A549 (cell line): ENCODE measurements at regions of chr12 and their contacts with region 1.

Region 1: DNA sequence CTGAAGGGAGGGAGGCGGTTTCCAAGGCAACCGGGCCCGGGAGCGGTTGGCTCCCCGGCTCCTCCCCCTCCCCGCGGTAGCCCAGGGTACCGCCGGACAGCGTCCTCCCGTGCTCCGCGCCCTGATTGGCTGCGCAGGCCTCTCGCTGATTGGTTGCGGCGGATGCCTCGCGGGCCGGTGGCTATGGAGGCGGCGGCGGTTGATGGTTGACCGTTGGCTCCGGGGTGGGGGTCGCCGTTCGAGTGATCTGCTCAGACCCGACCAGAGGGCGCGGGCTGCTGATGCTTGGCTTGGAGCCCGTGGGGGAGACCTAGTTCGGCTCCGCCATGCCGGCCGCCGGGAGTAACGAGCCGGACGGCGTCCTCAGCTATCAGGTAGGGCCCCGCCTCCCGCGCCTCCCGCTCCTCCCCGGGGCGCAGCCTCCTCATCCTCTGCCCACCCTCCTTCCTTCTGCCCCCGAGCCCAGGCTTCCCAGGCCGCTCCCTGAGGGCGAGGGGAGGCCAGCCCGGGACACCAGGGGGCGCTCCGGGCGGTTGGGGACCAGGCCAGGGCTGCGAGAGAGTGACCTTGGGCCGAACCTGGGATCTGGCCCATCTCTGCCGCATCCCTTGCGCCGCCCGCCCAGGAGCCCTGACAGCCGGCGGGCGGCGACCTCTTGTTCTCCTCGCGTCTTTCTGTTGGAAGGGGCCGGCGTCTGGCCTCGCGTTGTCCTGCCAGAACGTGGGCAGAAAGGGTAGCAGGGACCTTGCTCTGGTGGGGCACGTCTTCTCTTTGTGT is at the start of gene SLC4A8:
- DNase-seq: peak; percentile 80 to 96
- ATAC-seq: peak; percentile 96 to 98
- H3K4me3 ChIP-seq: peak within 1 kb of the TSS; percentile 65
- H3K27ac ChIP-seq: peak within 1 kb of the TSS in 1 of 2 experiments; percentile 75; a peak in 3 of 6 replicates
- H3K4me1 ChIP-seq: peaks cover 5% of the 10 kb centered on the region
- CTCF ChIP-seq: peak; percentile 90
- EP300 ChIP-seq: no peak
- POLR2A ChIP-seq: no peak
- RAD21 ChIP-seq: peak; percentile 56 to 79
- polyA plus RNA-seq, gene SLC4A8: 1.7 and 2.3 TPM in 2 replicates

Region 2: DNA sequence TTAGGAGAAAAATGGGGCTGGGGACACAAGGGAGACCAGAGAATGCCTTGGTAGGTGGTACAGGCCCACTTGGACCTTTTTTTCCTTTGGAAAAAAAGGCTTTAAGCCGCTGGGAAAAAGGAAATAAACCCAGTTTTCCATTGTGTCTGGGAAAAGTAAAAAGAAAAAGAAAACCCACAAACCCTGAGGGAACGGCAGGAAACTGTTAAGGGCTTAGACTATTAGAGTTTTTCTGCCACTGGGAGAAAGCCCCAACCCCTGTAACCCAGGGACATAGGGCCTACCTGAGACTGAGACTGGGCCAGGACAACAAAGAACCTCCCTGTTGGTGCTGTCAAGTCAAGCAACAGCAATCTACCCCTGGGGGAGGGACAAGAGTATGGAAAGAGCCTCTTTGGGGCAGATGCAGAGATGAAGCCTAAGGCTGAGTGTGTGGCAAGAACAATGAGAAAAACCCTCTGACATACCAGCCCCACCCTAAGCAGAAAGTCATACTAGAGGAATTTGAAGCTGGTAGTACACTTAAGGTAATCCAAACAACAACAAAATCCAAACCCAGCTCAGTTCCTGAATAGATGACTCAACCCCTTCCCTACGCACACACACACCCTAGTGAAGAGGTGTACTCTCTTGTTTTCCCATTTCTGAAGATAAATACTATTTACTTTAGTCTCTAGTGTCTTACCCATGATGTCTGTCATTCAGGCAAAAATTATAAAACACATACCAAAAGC is 638.2 kb before region 1 on chr12:
- CTCF ChIA-PET with region 1: no interaction called
- POLR2A ChIA-PET with region 1: no interaction called
- DNase-seq: peak; percentile 84 to 99
- ATAC-seq: peak; percentile 97 to 98
- H3K4me3 ChIP-seq: no peak overlapping the region
- H3K27ac ChIP-seq: peak overlapping the region; percentile 70 to 85
- H3K4me1 ChIP-seq: peaks cover 52% of the 10 kb centered on the region
- CTCF ChIP-seq: no peak
- EP300 ChIP-seq: peak; percentile 66 to 80; a peak in 4 of 5 replicates
- POLR2A ChIP-seq: no peak
- RAD21 ChIP-seq: peak in 1 of 2 experiments; percentile 1; a peak in 2 of 5 replicates

Region 3: GRCh38 chr12:51392556-51393237 is 32.2 kb before region 1 on chr12:
- CTCF ChIA-PET with region 1: interaction called, 19 read pairs
- POLR2A ChIA-PET with region 1: no interaction called
- DNase-seq: no peak
- ATAC-seq: no peak
- H3K4me3 ChIP-seq: no peak overlapping the region
- H3K27ac ChIP-seq: no peak overlapping the region
- H3K4me1 ChIP-seq: peaks cover 14% of the 10 kb centered on the region
- CTCF ChIP-seq: no peak
- EP300 ChIP-seq: no peak
- POLR2A ChIP-seq: no peak
- RAD21 ChIP-seq: no peak

Region 4: DNA sequence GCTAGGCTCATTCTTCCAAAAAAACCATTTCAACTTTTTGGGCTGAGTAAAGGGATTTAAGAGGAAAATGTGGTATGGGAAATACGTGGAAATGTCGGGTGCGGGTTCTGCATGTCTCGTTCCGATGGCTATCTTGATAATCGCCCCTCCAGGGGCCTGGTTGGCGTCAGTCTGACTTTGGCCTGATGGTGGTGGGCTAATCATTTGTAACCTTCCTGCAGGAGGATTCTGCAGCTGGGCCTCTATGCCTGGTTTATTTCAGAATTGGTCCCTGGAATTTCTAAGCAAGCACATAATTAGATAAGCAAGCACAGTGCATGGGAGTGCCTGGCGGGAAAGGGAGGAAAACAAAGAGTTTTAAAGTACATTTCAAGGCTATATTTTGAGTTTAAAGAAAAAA is 15.0 kb before region 1 on chr12:
- CTCF ChIA-PET with region 1: interaction called, 19 read pairs
- POLR2A ChIA-PET with region 1: no interaction called
- DNase-seq: no peak
- ATAC-seq: no peak
- H3K4me3 ChIP-seq: no peak overlapping the region
- H3K27ac ChIP-seq: no peak overlapping the region
- H3K4me1 ChIP-seq: no peaks in the 10 kb centered on the region
- CTCF ChIP-seq: no peak
- EP300 ChIP-seq: no peak
- POLR2A ChIP-seq: no peak
- RAD21 ChIP-seq: no peak

Region 5: DNA sequence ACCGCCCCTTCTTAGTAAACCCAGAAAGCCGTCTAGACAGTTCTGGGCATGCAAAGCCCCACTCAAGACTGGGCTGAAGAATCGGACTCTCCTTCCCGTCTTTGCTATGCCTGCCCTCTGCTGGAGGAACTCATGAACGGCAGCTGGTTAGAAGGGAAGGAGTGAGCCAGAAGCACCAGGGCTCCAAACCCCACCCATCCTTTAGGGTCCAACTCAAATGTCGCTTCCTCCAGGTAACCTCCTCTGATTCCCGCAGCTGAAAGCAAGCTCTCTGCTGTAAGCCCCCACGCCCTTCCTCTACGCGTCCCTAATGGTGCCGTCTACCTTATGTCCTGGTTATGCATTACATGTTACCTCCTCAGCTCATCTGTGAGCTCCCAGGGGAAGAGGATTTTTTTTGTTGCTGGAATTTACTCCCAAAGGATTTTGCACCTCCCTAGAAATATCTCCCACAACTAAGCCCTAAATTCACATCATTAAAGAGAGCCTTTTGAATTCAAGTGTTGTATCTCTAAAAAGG is 107.2 kb after region 1 on chr12:
- CTCF ChIA-PET with region 1: interaction called, 245 read pairs
- POLR2A ChIA-PET with region 1: no interaction called
- DNase-seq: peak; percentile 76 to 79
- ATAC-seq: peak; percentile 83 to 94
- H3K4me3 ChIP-seq: no peak overlapping the region
- H3K27ac ChIP-seq: peak overlapping the region in 1 of 2 experiments; percentile 52; a peak in 1 of 6 replicates
- H3K4me1 ChIP-seq: peaks cover 19% of the 10 kb centered on the region; the same call in 2 of the 3 replicates
- CTCF ChIP-seq: peak; percentile 89
- EP300 ChIP-seq: no peak
- POLR2A ChIP-seq: no peak
- RAD21 ChIP-seq: peak; percentile 84 to 89

Region 6: GRCh38 chr12:51814311-51815088 is 389.6 kb after region 1 on chr12:
- CTCF ChIA-PET with region 1: interaction called, 155 read pairs
- POLR2A ChIA-PET with region 1: interaction called, 4 read pairs
- DNase-seq: peak; percentile 82 to 86
- ATAC-seq: peak; percentile 88 to 90
- H3K4me3 ChIP-seq: peak overlapping the region; percentile 46
- H3K27ac ChIP-seq: peak overlapping the region; percentile 80 to 97
- H3K4me1 ChIP-seq: peaks cover 23% of the 10 kb centered on the region
- CTCF ChIP-seq: peak; percentile 93
- EP300 ChIP-seq: no peak
- POLR2A ChIP-seq: peak; percentile 38
- RAD21 ChIP-seq: peak; percentile 53 to 77

Region 7: DNA sequence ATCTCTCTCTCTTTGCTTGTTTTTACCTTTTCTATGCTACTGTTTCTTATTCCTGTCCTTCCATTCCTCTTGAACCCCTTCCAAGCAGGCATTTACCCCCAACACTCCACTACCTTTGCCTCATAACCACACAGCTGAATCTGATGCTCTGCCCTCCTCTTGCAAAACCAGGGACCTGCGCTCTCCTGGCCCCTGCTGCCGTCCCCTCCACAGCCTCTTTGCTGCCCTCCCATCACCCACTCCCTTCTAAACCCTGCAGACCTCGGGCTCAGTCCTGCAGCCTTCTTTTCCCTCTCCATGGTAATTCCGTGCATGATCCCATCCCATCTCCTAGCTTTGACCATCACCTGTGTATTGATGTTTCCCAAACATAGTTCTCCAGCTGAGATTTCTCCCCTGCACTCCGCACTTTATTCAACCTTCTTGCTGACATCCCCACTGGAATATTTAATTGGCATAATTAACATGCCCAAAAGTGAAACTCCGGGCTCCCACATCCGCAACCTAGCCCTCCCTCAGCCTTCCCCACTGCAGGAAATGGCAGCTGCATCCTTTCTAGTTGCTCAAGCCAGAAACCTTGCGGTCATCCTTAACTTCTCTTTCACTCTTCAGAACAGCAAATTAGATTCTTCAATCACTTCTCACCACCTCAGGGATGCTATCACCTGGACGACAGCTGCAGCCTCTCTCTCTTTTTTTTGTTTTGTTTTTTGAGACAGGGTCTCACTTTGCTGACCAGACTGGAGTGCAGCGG is 407.7 kb after region 1 on chr12:
- CTCF ChIA-PET with region 1: interaction called, 12 read pairs
- POLR2A ChIA-PET with region 1: no interaction called
- DNase-seq: no peak
- ATAC-seq: no peak; a peak in 1 of 6 replicates
- H3K4me3 ChIP-seq: no peak overlapping the region
- H3K27ac ChIP-seq: no peak overlapping the region
- H3K4me1 ChIP-seq: peaks cover 6% of the 10 kb centered on the region; the same call in 2 of the 3 replicates
- CTCF ChIP-seq: no peak
- EP300 ChIP-seq: no peak
- POLR2A ChIP-seq: no peak
- RAD21 ChIP-seq: no peak

Region 8: GRCh38 chr12:51923501-51924271 is 498.8 kb after region 1 on chr12:
- CTCF ChIA-PET with region 1: interaction called, 11 read pairs
- POLR2A ChIA-PET with region 1: no interaction called
- DNase-seq: peak in 1 of 2 experiments; percentile 49
- ATAC-seq: peak; percentile 75 to 93; a peak in 4 of 6 replicates
- H3K4me3 ChIP-seq: no peak overlapping the region
- H3K27ac ChIP-seq: peak overlapping the region in 1 of 2 experiments; percentile 58; a peak in 2 of 6 replicates
- H3K4me1 ChIP-seq: peaks cover 7% of the 10 kb centered on the region; the same call in 2 of the 3 replicates
- CTCF ChIP-seq: peak; percentile 80
- EP300 ChIP-seq: no peak
- POLR2A ChIP-seq: no peak
- RAD21 ChIP-seq: peak; percentile 31 to 34; a peak in 3 of 5 replicates